Activated CD4-positive, alpha-beta T cell treated with anti-CD3 and anti-CD28 coated beads, Interleukin-2, amount 10 ng/mL, durations not matched to agents 24 days and 14 days (primary cell): ENCODE measurements at regions of chr4 and their contacts with region 1.

Region 1: DNA sequence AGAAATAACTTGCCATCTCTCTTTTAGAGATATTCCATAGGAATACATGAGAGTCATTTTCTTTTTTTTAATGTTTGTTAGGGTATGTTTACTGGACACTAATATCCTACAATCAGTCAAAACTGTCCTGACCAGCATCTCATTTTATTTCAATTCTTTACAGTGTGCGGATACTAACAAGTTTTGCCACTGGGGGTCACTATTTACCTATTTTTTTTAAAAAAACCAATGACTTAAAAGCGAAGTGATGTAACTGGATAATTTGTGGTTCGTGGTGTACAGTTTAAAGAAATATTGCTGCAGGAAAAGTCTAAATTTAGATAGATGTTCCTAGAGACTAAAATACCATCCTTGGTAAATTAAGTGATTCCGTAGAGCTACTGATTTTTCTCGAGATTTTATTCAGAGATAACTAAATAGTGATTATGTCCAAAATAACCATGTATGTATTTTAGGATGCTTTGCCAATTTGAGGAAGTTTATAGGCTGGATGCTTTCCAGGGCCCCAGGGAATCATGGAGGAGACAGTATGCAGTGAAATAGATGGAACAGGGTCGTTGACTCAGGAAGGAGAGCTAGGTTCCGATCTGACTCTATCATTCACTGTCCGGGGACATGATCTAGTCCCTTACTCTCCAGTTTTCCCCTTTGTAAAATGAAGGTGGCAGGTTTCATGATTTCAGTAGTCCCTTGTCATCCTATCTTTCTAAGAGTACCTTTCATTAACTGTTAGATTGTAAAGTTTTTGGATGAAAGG is 34.0 kb upstream of the GNPDA2 start:
- DNase-seq: peak; percentile 61
- H3K4me3 Mint-ChIP-seq: no peak overlapping the region
- H3K27ac Mint-ChIP-seq: no peak overlapping the region
- H3K4me1 Mint-ChIP-seq: no peaks in the 10 kb centered on the region
- H3K27me3 Mint-ChIP-seq: peaks cover 2% of the 10 kb centered on the region

Region 2: GRCh38 chr4:44713125-44713524 is 47.2 kb before region 1 on chr4:
- intact Hi-C with region 1: no loop called
- DNase-seq: no peak
- H3K4me3 Mint-ChIP-seq: no peak overlapping the region
- H3K27ac Mint-ChIP-seq: no peak overlapping the region
- H3K4me1 Mint-ChIP-seq: no peaks in the 10 kb centered on the region
- H3K27me3 Mint-ChIP-seq: no peaks in the 10 kb centered on the region

Region 3: GRCh38 chr4:45036677-45037076 is 276.4 kb after region 1 on chr4:
- intact Hi-C with region 1: no loop called
- DNase-seq: no peak
- H3K4me3 Mint-ChIP-seq: no peak overlapping the region
- H3K27ac Mint-ChIP-seq: no peak overlapping the region
- H3K4me1 Mint-ChIP-seq: no peaks in the 10 kb centered on the region
- H3K27me3 Mint-ChIP-seq: no peaks in the 10 kb centered on the region

Region 4: DNA sequence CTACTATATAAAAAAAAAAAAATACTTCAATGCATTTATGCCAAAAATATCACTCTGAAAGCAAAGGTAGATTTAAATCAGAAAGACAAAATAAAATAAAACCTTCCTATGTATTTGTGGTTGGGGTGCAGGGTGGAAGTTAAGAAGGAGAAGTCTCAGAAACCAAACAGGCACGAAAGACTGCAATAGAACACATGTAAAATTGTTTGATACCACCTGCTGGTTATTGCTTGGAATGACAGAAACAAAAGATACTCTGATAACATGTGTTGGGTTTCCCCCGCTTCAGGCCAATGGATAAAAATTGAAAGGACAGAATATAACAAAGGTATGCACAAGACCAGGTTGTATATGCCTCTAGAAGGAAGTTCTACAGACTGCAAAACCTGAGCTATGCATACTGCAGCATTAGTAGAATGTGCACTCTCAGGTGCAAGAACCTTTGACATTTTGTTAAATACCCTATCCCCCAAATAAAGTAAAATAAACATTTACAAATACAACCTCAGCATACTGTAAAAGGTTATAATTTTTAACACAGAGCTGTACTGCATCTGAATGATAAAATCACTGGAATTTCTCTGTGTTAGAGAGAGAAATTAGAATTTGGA is 1510.8 kb after region 1 on chr4:
- intact Hi-C with region 1: loop called (anchors 5 kb)
- DNase-seq: no peak
- H3K4me3 Mint-ChIP-seq: no peak overlapping the region
- H3K27ac Mint-ChIP-seq: no peak overlapping the region
- H3K4me1 Mint-ChIP-seq: no peaks in the 10 kb centered on the region
- H3K27me3 Mint-ChIP-seq: no peaks in the 10 kb centered on the region